CD4-positive, alpha-beta memory T cell (primary cell): ENCODE measurements at regions of chrX and their contacts with region 1.

Region 1: GRCh38 chrX:2627272-2627867 is 63.7 kb upstream of the CD99 start:
- DNase-seq: peak in 4 of 5 donors; percentile 32 to 43 (median 38)
- H3K4me3 ChIP-seq: no peak overlapping the region
- H3K4me3 Mint-ChIP-seq: peak overlapping the region in 1 of 8 donors; percentile 17
- H3K27ac ChIP-seq: no peak overlapping the region
- H3K27ac Mint-ChIP-seq: peak overlapping the region in 5 of 7 donors; percentile 48 to 92 (median 65)
- H3K4me1 ChIP-seq: peaks cover 19% of the 10 kb centered on the region
- H3K4me1 Mint-ChIP-seq: peaks cover 31 to 49% (median 38%) of the 10 kb centered on the region in 4 donors
- H3K27me3 ChIP-seq: no peaks in the 10 kb centered on the region
- H3K27me3 Mint-ChIP-seq: no peaks in the 10 kb centered on the region

Region 2: GRCh38 chrX:1391707-1392375 is 1235.5 kb before region 1 on chrX and contains the start of gene SLC25A6:
- CTCF ChIA-PET with region 1: no interaction called
- POLR2A ChIA-PET with region 1: no interaction called
- intact Hi-C with region 1: loop called (anchors 1 kb)
- DNase-seq: peak; percentile 98 to 99 (median 99)
- H3K4me3 ChIP-seq: peak within 1 kb of the TSS; percentile 61 to 94
- H3K4me3 Mint-ChIP-seq: peak within 1 kb of the TSS; percentile 88 to 94 (median 91)
- H3K27ac ChIP-seq: peak within 1 kb of the TSS; percentile 94
- H3K27ac Mint-ChIP-seq: peak within 1 kb of the TSS; percentile 83 to 96 (median 90)
- H3K4me1 ChIP-seq: peaks cover 47% of the 10 kb centered on the region
- H3K4me1 Mint-ChIP-seq: peaks cover 16 to 52% (median 34%) of the 10 kb centered on the region in 4 donors
- H3K27me3 ChIP-seq: no peaks in the 10 kb centered on the region
- H3K27me3 Mint-ChIP-seq: no peaks in the 10 kb centered on the region
- total RNA-seq, gene SLC25A6: 249 to 252 TPM

Region 3: DNA sequence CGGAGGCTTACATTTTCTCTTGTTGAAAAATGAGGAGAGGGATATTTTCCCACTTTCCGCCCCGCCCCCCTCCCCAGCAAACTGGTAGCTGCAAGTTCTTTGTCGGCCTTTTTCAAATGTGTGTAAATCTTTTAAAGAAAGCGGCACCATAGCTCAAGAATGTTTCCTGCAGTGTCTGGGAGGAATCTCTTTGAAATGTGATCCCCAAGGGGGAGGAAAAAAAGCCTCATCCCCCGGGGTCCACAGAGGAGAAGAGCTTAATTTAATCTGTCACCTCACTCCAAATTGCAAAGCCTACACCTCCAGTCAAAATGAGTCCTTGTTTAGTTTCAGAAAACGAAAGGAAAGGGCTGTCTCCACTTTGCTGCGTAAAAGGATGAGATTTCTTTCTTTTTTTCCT is 977.7 kb before region 1 on chrX:
- CTCF ChIA-PET with region 1: no interaction called
- POLR2A ChIA-PET with region 1: no interaction called
- intact Hi-C with region 1: loop called (anchors 1 kb)
- DNase-seq: no peak
- H3K4me3 ChIP-seq: no peak overlapping the region
- H3K4me3 Mint-ChIP-seq: no peak overlapping the region
- H3K27ac ChIP-seq: no peak overlapping the region
- H3K27ac Mint-ChIP-seq: no peak overlapping the region
- H3K4me1 ChIP-seq: no peaks in the 10 kb centered on the region
- H3K4me1 Mint-ChIP-seq: peaks cover 5 to 10% (median 8%) of the 10 kb centered on the region in 4 donors
- H3K27me3 ChIP-seq: no peaks in the 10 kb centered on the region
- H3K27me3 Mint-ChIP-seq: peaks cover 2 to 8% of the 10 kb centered on the region in 2 donors

Region 4: GRCh38 chrX:2608638-2609430 is 18.5 kb before region 1 on chrX:
- CTCF ChIA-PET with region 1: no interaction called
- POLR2A ChIA-PET with region 1: no interaction called
- intact Hi-C with region 1: loop called (anchors 1 kb)
- DNase-seq: peak; percentile 78 to 87 (median 84)
- H3K4me3 ChIP-seq: peak overlapping the region; percentile 30 to 90
- H3K4me3 Mint-ChIP-seq: peak overlapping the region; percentile 91 to 97 (median 93)
- H3K27ac ChIP-seq: peak overlapping the region; percentile 59
- H3K27ac Mint-ChIP-seq: peak overlapping the region; percentile 84 to 94 (median 88)
- H3K4me1 ChIP-seq: peaks cover 35% of the 10 kb centered on the region
- H3K4me1 Mint-ChIP-seq: peaks cover 30 to 74% (median 52%) of the 10 kb centered on the region in 4 donors
- H3K27me3 ChIP-seq: no peaks in the 10 kb centered on the region
- H3K27me3 Mint-ChIP-seq: no peaks in the 10 kb centered on the region

Region 5: GRCh38 chrX:2664502-2664901 is 37.1 kb after region 1 on chrX:
- CTCF ChIA-PET with region 1: no interaction called
- POLR2A ChIA-PET with region 1: no interaction called
- intact Hi-C with region 1: no loop called
- DNase-seq: no peak
- H3K4me3 ChIP-seq: no peak overlapping the region
- H3K4me3 Mint-ChIP-seq: no peak overlapping the region
- H3K27ac ChIP-seq: no peak overlapping the region
- H3K27ac Mint-ChIP-seq: no peak overlapping the region
- H3K4me1 ChIP-seq: no peaks in the 10 kb centered on the region
- H3K4me1 Mint-ChIP-seq: no peaks in the 10 kb centered on the region
- H3K27me3 ChIP-seq: no peaks in the 10 kb centered on the region
- H3K27me3 Mint-ChIP-seq: no peaks in the 10 kb centered on the region

Region 6: DNA sequence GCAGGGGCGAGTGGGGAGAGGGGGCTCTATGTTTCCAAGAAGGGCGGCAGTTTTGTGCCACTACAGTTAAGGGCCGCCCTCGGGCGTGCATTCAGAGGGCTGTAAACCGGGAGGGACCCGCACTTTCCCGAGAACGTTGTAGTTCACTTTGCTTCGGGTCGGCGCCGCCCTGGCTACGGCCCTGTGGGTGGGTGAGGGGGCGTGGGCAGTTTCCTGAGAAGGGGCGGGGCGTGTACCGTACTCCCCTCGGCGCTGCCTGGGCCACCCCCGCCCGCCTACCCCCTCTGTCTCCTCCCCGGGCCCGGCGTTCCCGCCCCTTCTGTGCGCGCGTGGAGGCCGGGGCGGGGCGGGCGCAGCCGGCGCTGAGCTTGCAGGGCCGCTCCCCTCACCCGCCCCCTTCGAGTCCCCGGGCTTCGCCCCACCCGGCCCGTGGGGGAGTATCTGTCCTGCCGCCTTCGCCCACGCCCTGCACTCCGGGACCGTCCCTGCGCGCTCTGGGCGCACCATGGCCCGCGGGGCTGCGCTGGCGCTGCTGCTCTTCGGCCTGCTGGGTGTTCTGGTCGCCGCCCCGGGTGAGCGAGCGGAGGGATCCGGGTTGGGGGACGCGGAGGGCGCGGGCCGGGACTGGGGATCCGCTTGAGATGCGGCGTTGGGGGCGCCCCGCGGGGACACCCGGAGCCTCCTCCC is 63.6 kb after region 1 on chrX and contains the start of gene CD99:
- CTCF ChIA-PET with region 1: no interaction called
- POLR2A ChIA-PET with region 1: no interaction called
- intact Hi-C with region 1: loop called (anchors 1 kb)
- DNase-seq: peak; percentile 87 to 95 (median 88)
- H3K4me3 ChIP-seq: peak within 1 kb of the TSS; percentile 96 to 98
- H3K4me3 Mint-ChIP-seq: peak within 1 kb of the TSS; percentile 92 to 99 (median 96)
- H3K27ac ChIP-seq: peak within 1 kb of the TSS; percentile 72
- H3K27ac Mint-ChIP-seq: peak within 1 kb of the TSS; percentile 86 to 97 (median 93)
- H3K4me1 ChIP-seq: peaks cover 34% of the 10 kb centered on the region
- H3K4me1 Mint-ChIP-seq: peaks cover 23 to 48% (median 33%) of the 10 kb centered on the region in 4 donors
- H3K27me3 ChIP-seq: no peaks in the 10 kb centered on the region
- H3K27me3 Mint-ChIP-seq: no peaks in the 10 kb centered on the region
- total RNA-seq, gene CD99: 283 to 289 TPM

Region 7: DNA sequence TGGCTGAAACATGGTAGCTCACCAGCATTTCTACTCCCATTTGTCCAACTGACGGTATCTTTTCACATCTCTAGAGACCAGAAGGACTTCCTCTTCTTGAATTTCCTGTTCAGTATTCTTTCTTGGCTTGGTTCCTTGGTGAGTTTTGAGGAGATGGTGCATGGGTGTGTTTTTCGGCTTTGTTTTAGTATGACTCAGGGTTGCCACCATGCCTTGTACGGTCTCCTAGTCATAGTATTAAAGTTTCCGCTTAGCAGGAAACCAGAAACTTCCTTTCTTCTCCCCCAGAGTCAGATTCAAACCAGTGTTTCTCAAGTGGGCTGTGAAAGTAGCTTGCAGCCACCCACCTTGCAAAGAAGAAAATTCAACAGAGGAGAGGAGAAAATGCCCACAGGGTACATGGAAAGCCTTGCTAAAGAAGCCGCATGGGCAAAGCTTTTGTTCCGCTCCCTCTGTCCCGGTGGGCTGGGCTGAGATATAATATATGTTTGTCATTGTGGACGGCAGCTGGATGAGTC is 69.4 kb after region 1 on chrX:
- CTCF ChIA-PET with region 1: no interaction called
- POLR2A ChIA-PET with region 1: no interaction called
- intact Hi-C with region 1: loop called (anchors 1 kb)
- DNase-seq: peak; percentile 64 to 89 (median 70)
- H3K4me3 ChIP-seq: peak overlapping the region in 1 of 2 donors; percentile 48
- H3K4me3 Mint-ChIP-seq: peak overlapping the region; percentile 41 to 98 (median 75)
- H3K27ac ChIP-seq: peak overlapping the region; percentile 60
- H3K27ac Mint-ChIP-seq: peak overlapping the region; percentile 86 to 94 (median 92)
- H3K4me1 ChIP-seq: peaks cover 91% of the 10 kb centered on the region
- H3K4me1 Mint-ChIP-seq: peaks cover 68 to 100% (median 84%) of the 10 kb centered on the region in 4 donors
- H3K27me3 ChIP-seq: no peaks in the 10 kb centered on the region
- H3K27me3 Mint-ChIP-seq: no peaks in the 10 kb centered on the region